ENCODE measurements at regions of chr19 and their contacts with region 1.

Region 1: GRCh38 chr19:49983645-49984229 is 22.8 kb upstream of the SIGLEC11 start:
- DNase-seq: peak; percentile 86
- H3K4me3 Mint-ChIP-seq: no peak overlapping the region
- H3K27ac Mint-ChIP-seq: no peak overlapping the region
- H3K4me1 Mint-ChIP-seq: peaks cover 10% of the 10 kb centered on the region
- H3K27me3 Mint-ChIP-seq: no peaks in the 10 kb centered on the region

Region 2: GRCh38 chr19:49889687-49890348 is 93.9 kb before region 1 on chr19:
- CTCF ChIA-PET with region 1: interaction called, 6 read pairs
- POLR2A ChIA-PET with region 1: no interaction called
- intact Hi-C with region 1: loop called (anchors 1 kb)
- DNase-seq: peak; percentile 84
- H3K4me3 Mint-ChIP-seq: peak overlapping the region; percentile 69
- H3K27ac Mint-ChIP-seq: peak overlapping the region; percentile 76
- H3K4me1 Mint-ChIP-seq: peaks cover 46% of the 10 kb centered on the region
- H3K27me3 Mint-ChIP-seq: no peaks in the 10 kb centered on the region

Region 3: DNA sequence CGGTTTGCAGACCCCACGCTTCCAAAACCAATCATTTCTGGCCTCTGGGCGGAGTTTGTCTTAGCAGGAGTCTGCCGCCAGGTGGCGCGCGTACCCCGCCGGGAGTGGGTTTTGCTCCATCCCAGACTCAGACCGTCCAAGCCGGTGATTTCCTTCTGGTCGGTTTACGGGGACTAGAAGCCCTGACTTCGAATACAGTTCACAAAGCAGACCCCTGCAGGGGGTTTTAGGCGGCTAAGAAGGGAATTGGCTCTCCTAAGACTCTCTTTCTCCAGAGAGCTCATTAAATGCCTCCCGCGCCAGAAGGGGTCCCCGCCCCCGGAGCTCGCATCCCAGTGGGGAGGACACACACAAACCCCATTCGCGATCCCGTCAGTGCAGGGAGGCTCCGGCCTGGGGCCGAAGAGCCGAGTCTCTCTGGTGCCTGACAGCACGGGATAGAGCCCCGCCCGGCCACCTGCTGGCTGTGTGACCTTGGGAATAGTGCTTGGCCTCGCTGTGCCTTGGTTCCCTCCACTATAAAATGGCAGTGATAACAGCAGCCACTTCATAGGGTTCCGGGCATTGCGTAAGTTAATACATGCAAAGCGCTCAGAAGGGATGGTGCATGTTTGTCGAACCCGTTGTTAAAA is 45.9 kb before region 1 on chr19:
- CTCF ChIA-PET with region 1: interaction called, 114 read pairs
- POLR2A ChIA-PET with region 1: no interaction called
- intact Hi-C with region 1: loop called (anchors 1 kb)
- DNase-seq: peak; percentile 86
- H3K4me3 Mint-ChIP-seq: no peak overlapping the region
- H3K27ac Mint-ChIP-seq: no peak overlapping the region
- H3K4me1 Mint-ChIP-seq: peaks cover 10% of the 10 kb centered on the region
- H3K27me3 Mint-ChIP-seq: peaks cover 13% of the 10 kb centered on the region

Measured in activated CD4-positive, alpha-beta memory T cell treated with anti-CD3 and anti-CD28 coated beads for 36 hours (primary cell).